Panc1 (cell line): ENCODE measurements at regions of chr2 and their contacts with region 1.

Region 1: DNA sequence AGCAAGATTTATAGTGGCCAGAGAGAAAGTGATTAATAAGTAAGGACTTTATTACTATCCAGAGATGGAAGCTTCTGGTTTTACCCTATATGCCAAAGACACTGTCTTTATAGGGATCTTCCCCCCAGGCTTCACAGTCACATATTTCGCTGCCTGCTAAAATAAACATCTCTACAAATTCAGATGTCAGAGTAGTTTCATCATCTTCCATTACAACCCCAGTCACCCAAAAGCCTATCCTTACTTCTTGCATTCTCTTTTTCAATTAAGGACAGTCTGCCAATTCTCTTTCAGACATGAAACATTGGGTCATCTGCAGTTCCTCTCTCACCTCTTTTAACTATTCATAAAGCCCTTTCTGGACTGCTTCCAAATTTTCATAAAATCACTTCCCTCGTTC is 28.3 kb downstream of the CREB1 start:
- DNase-seq: no peak
- ATAC-seq: no peak
- H3K4me3 ChIP-seq: no peak overlapping the region
- H3K27ac ChIP-seq: peak overlapping the region; percentile 58; the same call in 1 of the 2 replicates
- H3K4me1 ChIP-seq: peaks cover 6% of the 10 kb centered on the region; the same call in 1 of the 2 replicates
- H3K27me3 ChIP-seq: no peaks in the 10 kb centered on the region
- CTCF ChIP-seq: no peak

Region 2: GRCh38 chr2:207529330-207530159 is 28.6 kb before region 1 on chr2 and contains the start of gene CREB1:
- CTCF ChIA-PET with region 1: no interaction called
- POLR2A ChIA-PET with region 1: interaction called, 12 read pairs
- in situ Hi-C with region 1: no loop called
- intact Hi-C with region 1: no loop called
- DNase-seq: peak; percentile 87
- ATAC-seq: peak; percentile 94
- H3K4me3 ChIP-seq: peak within 1 kb of the TSS; percentile 87 to 90
- H3K27ac ChIP-seq: peak within 1 kb of the TSS; percentile 98
- H3K4me1 ChIP-seq: peaks cover 20% of the 10 kb centered on the region
- H3K27me3 ChIP-seq: no peaks in the 10 kb centered on the region
- CTCF ChIP-seq: no peak; the same call in none of the 2 replicates
- total RNA-seq, gene CREB1: 31.1 TPM